Head of caudate nucleus (tissue), 42 donors: ENCODE measurements at regions of chr1 and their contacts with region 1.

Region 1: DNA sequence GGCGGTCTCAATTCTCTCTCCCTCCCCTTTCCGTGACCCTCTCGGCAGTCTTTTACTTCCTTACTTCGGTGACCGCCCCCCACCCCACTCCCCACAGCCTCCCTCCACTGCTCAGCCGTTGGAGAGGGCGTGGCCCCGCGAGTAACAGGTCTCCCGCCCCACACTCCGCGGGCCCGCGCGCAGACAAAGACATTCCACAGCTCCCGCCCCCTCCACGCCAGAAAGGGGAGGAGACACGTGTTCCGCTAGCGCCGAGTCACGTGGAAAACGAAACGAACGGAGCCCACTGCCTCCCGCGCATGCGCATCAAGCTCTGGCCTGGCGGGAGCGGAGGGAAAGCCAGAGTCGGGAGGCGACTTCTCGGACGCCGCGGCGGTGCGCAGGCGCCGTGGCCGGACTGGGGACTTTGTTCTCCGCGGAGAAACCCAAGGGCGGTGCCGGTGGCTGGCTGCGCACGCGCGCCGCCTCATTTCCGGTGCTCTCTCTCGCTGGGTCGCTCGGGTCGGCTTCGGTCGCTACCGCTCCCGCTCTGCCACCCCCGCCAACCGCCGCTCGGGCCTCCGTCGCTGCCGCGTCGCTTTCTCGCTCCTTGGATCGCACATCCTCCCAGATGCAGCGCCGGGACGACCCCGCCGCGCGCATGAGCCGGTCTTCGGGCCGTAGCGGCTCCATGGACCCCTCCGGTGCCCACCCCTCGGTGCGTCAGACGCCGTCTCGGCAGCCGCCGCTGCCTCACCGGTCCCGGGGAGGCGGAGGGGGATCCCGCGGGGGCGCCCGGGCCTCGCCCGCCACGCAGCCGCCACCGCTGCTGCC is at the start of gene KHDRBS1:
- DNase-seq: peak; percentile 95 to 99 (median 98)

Region 2: GRCh38 chr1:32072622-32073298 is 59.2 kb after region 1 on chr1 and contains the start of gene TMEM39B:
- intact Hi-C with region 1: loop called (anchors 2 kb)
- DNase-seq: peak; percentile 91 to 98 (median 96)